Transverse colon (tissue), 4 donors: ENCODE measurements at regions of chr17 and their contacts with region 1.

Region 1: GRCh38 chr17:55527540-55528118 is 16.4 kb upstream of the SMIM36 start:
- DNase-seq: no peak
- H3K4me3 ChIP-seq: no peak overlapping the region
- H3K27ac ChIP-seq: no peak overlapping the region
- H3K4me1 ChIP-seq: peaks cover 0 to 3% (median 0%) of the 10 kb centered on the region in 4 donors
- H3K27me3 ChIP-seq: no peaks in the 10 kb centered on the region
- CTCF ChIP-seq: peak in 4 of 5 experiments; percentile 29 to 40 (median 30)
- EP300 ChIP-seq: no peak
- POLR2A ChIP-seq: no peak

Region 2: DNA sequence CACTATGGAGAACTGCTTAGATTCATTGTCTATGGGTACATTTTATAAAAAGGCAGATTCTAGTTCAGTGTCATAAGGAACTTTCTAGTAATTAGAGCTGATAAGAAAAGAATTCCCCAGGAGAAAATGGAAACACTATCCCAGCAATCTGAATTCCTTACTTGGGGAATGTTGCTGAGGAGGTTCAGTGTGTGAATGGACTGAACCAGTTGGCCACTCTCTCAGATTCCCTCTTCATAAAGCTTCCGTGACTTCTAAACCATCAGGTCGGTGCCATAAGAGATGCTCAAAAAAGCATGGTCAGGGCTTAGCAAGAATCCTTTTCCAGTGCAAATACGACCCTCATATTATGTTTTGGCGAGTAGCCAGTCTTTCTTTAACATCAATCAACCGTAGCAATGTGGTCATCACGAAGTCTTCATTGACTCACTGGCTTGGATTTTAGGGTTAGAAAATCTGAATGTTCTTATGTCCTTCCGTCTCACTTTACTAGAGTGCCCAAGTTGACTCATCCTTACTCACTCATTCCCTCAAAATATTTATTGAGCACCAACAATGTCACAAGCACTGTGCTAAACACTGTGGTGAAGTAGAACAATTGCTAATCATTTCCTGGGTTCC is 365.6 kb before region 1 on chr17:
- in situ Hi-C with region 1: no loop called
- intact Hi-C with region 1: no loop called
- DNase-seq: no peak
- H3K4me3 ChIP-seq: no peak overlapping the region
- H3K27ac ChIP-seq: no peak overlapping the region
- H3K4me1 ChIP-seq: peaks cover 0 to 7% (median 5%) of the 10 kb centered on the region in 4 donors
- H3K27me3 ChIP-seq: no peaks in the 10 kb centered on the region
- CTCF ChIP-seq: no peak
- EP300 ChIP-seq: no peak
- POLR2A ChIP-seq: no peak

Region 3: DNA sequence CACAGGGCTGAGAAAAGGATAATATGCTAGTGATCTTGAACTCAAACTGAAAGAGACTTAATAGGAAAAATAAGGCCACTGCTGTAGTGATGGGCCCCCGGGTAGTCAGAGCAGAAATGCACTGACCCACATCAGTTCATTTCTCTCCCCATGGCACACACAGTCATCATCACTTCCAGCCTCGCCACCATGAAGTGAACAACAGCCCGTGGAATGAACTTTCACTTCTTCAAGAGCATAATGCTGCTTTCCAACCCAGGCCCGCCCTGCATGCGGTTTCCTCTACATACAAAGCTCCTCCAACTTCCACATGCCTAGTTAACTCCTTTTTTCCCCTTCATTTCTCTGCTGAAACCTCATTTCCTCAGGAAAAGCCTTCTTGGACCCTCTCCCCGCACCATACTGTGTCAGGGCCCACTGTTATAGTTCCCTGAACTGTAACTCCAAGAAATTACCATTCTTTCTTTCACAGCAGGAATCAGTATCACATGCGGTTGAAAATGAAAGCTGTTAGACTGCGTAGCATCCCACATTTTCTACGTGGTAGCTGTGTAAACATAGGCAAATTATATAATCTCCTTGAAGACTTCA is 49.5 kb after region 1 on chr17:
- in situ Hi-C with region 1: no loop called
- intact Hi-C with region 1: no loop called
- DNase-seq: peak; percentile 36
- H3K4me3 ChIP-seq: peak overlapping the region in 3 of 4 donors; percentile 9 to 45 (median 15)
- H3K27ac ChIP-seq: peak overlapping the region; percentile 72 to 86 (median 79)
- H3K4me1 ChIP-seq: peaks cover 3 to 21% (median 6%) of the 10 kb centered on the region in 4 donors
- H3K27me3 ChIP-seq: no peaks in the 10 kb centered on the region
- CTCF ChIP-seq: no peak
- EP300 ChIP-seq: no peak
- POLR2A ChIP-seq: no peak

Region 4: DNA sequence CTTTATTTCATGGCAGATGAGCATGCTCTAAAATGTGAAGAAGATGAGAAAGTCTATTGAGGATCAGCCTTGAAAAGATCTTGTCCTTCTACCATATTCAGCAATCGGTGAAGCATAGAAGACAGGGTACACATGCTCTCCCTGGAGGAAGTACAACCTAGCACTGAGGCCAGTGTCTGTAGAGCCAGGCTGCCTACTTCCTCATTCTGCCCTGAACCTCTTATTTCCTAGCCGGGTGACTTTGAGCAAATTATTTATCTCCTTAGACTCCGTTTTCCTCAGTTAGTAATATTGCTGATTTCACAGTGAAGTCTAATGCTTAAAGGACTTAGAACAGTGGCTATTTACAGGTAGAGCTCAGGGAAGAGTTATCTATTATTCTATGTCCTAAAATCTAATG is 136.7 kb after region 1 on chr17:
- in situ Hi-C with region 1: no loop called
- intact Hi-C with region 1: no loop called
- DNase-seq: no peak
- H3K4me3 ChIP-seq: no peak overlapping the region
- H3K27ac ChIP-seq: no peak overlapping the region
- H3K4me1 ChIP-seq: peaks cover 0 to 21% (median 2%) of the 10 kb centered on the region in 4 donors
- H3K27me3 ChIP-seq: no peaks in the 10 kb centered on the region
- CTCF ChIP-seq: no peak
- EP300 ChIP-seq: no peak
- POLR2A ChIP-seq: no peak

Region 5: DNA sequence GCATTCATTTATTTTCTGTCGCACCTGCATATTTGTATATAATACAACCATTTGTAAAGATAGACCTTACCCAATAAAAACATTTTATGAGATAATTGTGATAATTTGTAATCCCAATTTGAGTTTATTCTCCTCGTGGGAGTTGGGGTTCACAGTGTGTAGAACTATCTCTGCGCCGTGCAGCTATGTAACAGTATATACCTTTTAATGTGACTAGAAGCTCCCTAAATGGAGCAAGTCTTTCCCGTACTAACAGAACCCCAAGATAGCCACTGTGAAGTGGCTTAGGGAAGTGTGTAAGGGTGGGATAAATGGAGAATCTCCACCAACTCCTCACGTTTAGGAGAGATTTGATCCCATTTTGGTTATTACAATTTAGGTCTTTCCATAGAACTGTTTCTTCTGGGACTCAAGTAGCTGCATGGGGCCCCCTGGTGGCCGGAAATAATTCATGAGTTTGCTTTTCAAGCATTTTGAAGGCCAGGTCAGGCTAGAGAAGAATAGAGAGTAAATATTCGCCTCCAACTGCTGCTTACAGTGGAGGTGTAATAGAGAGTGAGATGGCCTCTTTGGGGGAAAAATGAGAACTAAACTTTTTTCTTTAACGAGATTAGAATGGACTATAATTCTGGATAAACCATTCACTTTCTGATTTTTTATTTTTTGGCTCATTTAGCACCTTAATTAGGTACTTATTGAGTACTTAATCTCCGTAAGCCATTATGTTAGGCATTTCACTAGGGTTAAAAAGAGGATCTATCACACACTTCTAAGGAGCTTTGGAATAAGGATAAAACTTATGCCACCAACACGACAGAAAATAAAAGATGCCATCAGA is 190.5 kb after region 1 on chr17:
- in situ Hi-C with region 1: loop called in 2 of 4 experiments (anchors 5 to 10 kb)
- intact Hi-C with region 1: loop called (anchors 2 kb)
- DNase-seq: peak; percentile 78
- H3K4me3 ChIP-seq: no peak overlapping the region
- H3K27ac ChIP-seq: no peak overlapping the region
- H3K4me1 ChIP-seq: peaks cover 0 to 7% (median 1%) of the 10 kb centered on the region in 4 donors
- H3K27me3 ChIP-seq: peaks cover 6% of the 10 kb centered on the region
- CTCF ChIP-seq: peak; percentile 64 to 81 (median 78)
- EP300 ChIP-seq: no peak
- POLR2A ChIP-seq: no peak

Region 6: DNA sequence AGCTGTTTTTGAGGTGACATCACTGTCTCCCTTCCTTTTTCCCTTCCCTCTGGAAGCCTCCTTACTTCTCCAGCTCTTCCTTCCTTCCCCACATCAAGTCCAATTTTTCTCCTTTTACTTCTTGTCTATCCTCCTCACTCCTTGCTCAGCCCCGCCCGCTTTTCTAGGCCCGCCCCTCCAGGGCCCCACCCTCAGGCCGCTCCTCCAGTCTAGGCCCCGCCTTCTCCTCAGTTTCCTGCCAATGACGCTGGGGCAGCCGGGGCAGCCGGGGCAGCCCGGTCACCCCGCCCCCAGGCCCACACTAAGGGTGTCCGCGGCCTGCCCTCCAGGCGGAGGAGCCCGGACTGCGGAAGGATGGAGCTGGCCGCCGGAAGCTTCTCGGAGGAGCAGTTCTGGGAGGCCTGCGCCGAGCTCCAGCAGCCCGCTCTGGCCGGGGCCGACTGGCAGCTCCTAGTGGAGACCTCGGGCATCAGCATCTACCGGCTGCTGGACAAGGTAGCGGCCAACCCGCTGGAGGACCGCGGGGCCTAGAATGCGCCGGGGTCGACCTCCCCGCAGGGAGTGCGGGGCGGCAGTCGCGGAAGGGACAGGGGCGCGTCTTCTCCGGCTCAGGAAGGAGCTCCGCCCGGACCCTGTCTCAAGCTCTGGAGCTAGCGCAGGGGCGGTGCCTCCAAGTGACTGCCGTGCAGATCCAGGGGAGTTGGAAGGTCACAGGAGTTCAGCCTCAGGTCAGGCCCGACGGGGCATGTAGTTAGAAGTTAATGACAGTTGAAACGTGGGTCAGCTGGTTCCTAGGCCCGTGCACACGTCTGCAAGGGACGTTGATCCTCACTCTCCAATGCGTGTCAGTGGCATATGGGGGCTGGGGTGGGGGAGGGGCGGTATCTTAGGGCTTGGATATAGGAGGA is 223.4 kb after region 1 on chr17 and contains the start of gene PCTP:
- in situ Hi-C with region 1: loop called in 1 of 4 experiments (anchors 25 kb)
- intact Hi-C with region 1: no loop called
- DNase-seq: peak; percentile 96
- H3K4me3 ChIP-seq: peak within 1 kb of the TSS; percentile 61 to 93 (median 74)
- H3K27ac ChIP-seq: peak within 1 kb of the TSS; percentile 82 to 95 (median 91)
- H3K4me1 ChIP-seq: peaks cover 7 to 21% (median 12%) of the 10 kb centered on the region in 4 donors
- H3K27me3 ChIP-seq: no peaks in the 10 kb centered on the region
- CTCF ChIP-seq: peak; percentile 27 to 66 (median 45)
- EP300 ChIP-seq: peak; percentile 14
- POLR2A ChIP-seq: peak; percentile 93
- total RNA-seq, gene PCTP: 8.6 to 581 (median 35.0) TPM

Region 7: DNA sequence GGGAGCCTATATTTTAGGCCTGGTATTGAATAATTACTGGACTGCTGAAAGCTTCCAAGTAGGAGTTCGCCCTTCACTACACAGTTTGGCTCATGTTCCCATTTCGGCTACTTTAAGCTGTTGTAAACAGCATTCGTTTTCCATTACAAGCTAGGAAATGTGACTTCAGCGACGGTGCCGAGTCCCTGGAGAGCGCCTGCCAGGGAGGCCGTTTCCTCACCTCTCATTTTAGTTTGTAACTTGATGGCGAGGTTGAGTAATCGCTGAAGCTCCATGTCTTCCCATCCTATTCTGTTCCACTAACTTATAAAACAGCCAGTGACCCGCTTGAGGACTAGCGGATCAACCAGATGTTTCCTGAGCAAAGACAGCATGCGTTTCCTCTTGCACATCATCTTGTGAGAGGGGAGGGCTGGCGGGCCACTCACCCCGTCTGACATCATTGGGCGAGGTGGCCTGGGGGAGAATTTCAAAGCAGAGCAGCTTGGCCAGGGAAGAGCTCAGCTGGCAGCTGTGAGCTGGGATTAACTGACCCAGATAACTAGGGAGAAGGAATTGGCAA is 256.1 kb after region 1 on chr17:
- in situ Hi-C with region 1: loop called in 1 of 4 experiments (anchors 10 kb)
- intact Hi-C with region 1: no loop called
- DNase-seq: peak; percentile 46
- H3K4me3 ChIP-seq: no peak overlapping the region
- H3K27ac ChIP-seq: peak overlapping the region in 3 of 4 donors; percentile 16 to 63 (median 48)
- H3K4me1 ChIP-seq: no peaks in the 10 kb centered on the region
- H3K27me3 ChIP-seq: no peaks in the 10 kb centered on the region
- CTCF ChIP-seq: no peak
- EP300 ChIP-seq: no peak
- POLR2A ChIP-seq: no peak